ENCODE measurements at regions of chrX and their contacts with region 1.

Region 1: GRCh38 chrX:132292793-132293192 is 73.5 kb upstream of the RAP2C start:
- DNase-seq: no peak
- ATAC-seq: peak; percentile 60
- H3K4me3 Mint-ChIP-seq: no peak overlapping the region
- H3K27ac Mint-ChIP-seq: no peak overlapping the region
- H3K4me1 Mint-ChIP-seq: no peaks in the 10 kb centered on the region
- H3K27me3 Mint-ChIP-seq: no peaks in the 10 kb centered on the region
- CTCF ChIP-seq: peak; percentile 19; the same call in 1 of the 2 replicates

Region 2: DNA sequence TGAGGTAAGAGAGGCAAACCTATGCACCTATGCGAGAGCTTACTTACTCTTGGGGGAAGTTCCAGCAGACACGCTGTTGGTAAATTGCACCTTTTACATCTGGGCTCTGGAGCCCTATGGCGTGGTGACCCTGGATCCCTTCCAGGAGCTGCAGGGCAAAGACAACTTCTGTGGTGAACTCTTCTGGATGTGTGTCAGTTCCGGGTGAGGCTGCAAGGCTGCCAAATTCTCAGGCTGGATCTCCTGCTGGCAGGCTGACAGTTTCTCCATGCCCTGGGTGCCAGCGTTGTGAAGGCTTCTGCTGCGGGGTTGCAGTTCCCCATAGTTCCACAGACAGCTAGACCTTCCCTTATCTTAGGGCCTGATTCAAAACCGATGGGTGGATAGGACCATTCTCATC is 111.4 kb before region 1 on chrX:
- CTCF ChIA-PET with region 1: no interaction called
- POLR2A ChIA-PET with region 1: no interaction called
- DNase-seq: no peak
- ATAC-seq: no peak
- H3K4me3 Mint-ChIP-seq: no peak overlapping the region
- H3K27ac Mint-ChIP-seq: no peak overlapping the region
- H3K4me1 Mint-ChIP-seq: peaks cover 5% of the 10 kb centered on the region; the same call in 1 of the 2 replicates
- H3K27me3 Mint-ChIP-seq: no peaks in the 10 kb centered on the region
- CTCF ChIP-seq: no peak

Region 3: DNA sequence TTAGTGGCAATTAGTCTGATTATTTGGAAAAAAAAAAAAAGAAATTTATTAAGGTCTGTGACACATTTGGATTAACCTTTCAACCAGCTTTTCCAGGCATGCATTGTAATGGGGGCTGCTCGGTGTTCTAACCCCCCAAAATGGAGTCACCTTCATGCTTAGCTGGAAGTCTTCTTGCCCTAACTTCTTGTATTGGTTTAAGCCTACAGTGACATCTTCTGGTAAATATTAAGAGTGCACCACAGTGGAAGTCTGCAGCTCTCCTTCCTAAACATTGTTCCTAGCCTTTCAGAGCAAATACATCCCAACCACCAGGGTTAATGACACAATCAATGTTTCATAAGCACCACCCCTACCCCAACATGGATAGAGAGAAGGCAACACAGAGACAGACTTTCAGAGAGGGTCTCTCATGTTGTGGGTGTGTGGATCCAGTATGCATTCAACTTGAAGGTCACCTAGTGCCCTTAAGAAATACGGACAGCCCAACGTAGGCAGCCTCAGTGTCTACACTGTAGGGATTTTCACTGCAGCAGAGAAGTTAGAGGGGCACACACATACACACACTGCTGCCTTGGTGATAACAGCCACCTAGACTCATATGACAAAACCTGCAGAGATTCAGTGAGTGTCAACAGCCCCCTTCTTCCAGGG is 338.9 kb after region 1 on chrX:
- CTCF ChIA-PET with region 1: interaction called, 13 read pairs
- POLR2A ChIA-PET with region 1: no interaction called
- DNase-seq: no peak
- ATAC-seq: peak; percentile 60; the same call in 1 of the 2 replicates
- H3K4me3 Mint-ChIP-seq: no peak overlapping the region
- H3K27ac Mint-ChIP-seq: no peak overlapping the region
- H3K4me1 Mint-ChIP-seq: no peaks in the 10 kb centered on the region
- H3K27me3 Mint-ChIP-seq: no peaks in the 10 kb centered on the region; the same call in 1 of the 2 replicates
- CTCF ChIP-seq: no peak